Sciatic nerve (tissue), 2 donors: ENCODE measurements at regions of chr15 and their contacts with region 1.

Region 1: GRCh38 chr15:90039986-90040385 is 38.9 kb downstream of the ZNF710 start:
- DNase-seq: no peak
- ATAC-seq: no peak

Region 2: DNA sequence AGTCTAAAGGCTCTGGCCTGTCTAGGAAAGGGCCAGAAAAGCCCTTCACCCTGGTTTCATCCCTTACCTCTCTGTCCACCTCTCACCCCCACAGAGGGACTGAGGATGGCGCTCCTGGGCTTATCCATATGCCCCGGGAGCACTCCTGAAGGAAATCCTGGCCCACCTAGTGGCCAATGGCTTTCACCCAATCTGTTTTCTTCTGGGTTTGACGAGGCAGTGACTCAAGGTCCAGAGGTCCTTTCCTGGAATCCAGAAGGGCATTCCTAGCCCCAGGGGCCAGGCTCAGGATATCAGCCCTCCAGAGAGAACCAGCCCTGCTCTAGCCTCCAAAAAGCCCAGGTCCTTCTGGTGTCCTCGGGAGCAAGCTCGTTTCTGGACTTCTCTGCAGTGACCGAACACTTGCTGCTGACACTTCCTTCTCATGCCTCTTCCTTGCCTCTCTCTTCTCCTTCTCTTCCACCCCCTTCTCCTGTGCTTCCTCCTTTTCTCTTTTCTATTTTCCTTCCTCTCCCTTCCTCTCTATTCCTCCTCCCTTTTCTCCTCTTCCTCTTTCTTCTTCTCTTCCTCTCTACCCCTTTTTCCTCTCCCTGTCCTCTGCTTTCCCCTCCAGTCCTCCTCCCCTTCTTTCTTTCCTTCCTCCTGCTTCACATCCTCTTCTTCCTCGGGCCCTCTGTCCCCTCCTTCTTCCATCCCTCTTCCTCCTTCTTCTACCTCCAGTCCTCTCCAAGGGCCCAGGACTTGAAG is 603.2 kb before region 1 on chr15:
- intact Hi-C with region 1: loop called (anchors 5 kb)
- DNase-seq: no peak
- ATAC-seq: no peak

Region 3: GRCh38 chr15:89947385-89947784 is 92.6 kb before region 1 on chr15:
- intact Hi-C with region 1: no loop called
- DNase-seq: no peak
- ATAC-seq: no peak